ENCODE measurements at regions of chr2 and their contacts with region 1.

Region 1: GRCh38 chr2:209334198-209335017 is 89.4 kb upstream of the MAP2 start:
- DNase-seq: peak; percentile 84
- H3K4me3 Mint-ChIP-seq: no peak overlapping the region
- H3K27ac Mint-ChIP-seq: no peak overlapping the region
- H3K4me1 Mint-ChIP-seq: no peaks in the 10 kb centered on the region
- H3K27me3 Mint-ChIP-seq: no peaks in the 10 kb centered on the region
- CTCF ChIP-seq: peak; percentile 94

Region 2: GRCh38 chr2:208392300-208393080 is 941.9 kb before region 1 on chr2:
- CTCF ChIA-PET with region 1: interaction called, 23 read pairs
- POLR2A ChIA-PET with region 1: no interaction called
- intact Hi-C with region 1: loop called (anchors 2 kb)
- DNase-seq: peak; percentile 17
- H3K4me3 Mint-ChIP-seq: no peak overlapping the region
- H3K27ac Mint-ChIP-seq: no peak overlapping the region
- H3K4me1 Mint-ChIP-seq: no peaks in the 10 kb centered on the region
- H3K27me3 Mint-ChIP-seq: no peaks in the 10 kb centered on the region
- CTCF ChIP-seq: no peak

Region 3: GRCh38 chr2:208872591-208872990 is 461.8 kb before region 1 on chr2:
- CTCF ChIA-PET with region 1: no interaction called
- POLR2A ChIA-PET with region 1: no interaction called
- intact Hi-C with region 1: no loop called
- DNase-seq: peak; percentile 34
- H3K4me3 Mint-ChIP-seq: no peak overlapping the region
- H3K27ac Mint-ChIP-seq: no peak overlapping the region
- H3K4me1 Mint-ChIP-seq: no peaks in the 10 kb centered on the region
- H3K27me3 Mint-ChIP-seq: no peaks in the 10 kb centered on the region
- CTCF ChIP-seq: no peak

Region 4: GRCh38 chr2:209311948-209312347 is 22.5 kb before region 1 on chr2:
- CTCF ChIA-PET with region 1: no interaction called
- POLR2A ChIA-PET with region 1: no interaction called
- intact Hi-C with region 1: no loop called
- DNase-seq: no peak
- H3K4me3 Mint-ChIP-seq: no peak overlapping the region
- H3K27ac Mint-ChIP-seq: no peak overlapping the region
- H3K4me1 Mint-ChIP-seq: peaks cover 6% of the 10 kb centered on the region
- H3K27me3 Mint-ChIP-seq: peaks cover 23% of the 10 kb centered on the region
- CTCF ChIP-seq: no peak

Region 5: GRCh38 chr2:209322041-209322440 is 12.4 kb before region 1 on chr2:
- CTCF ChIA-PET with region 1: interaction called, 38 read pairs
- POLR2A ChIA-PET with region 1: no interaction called
- intact Hi-C with region 1: no loop called
- DNase-seq: no peak
- H3K4me3 Mint-ChIP-seq: no peak overlapping the region
- H3K27ac Mint-ChIP-seq: no peak overlapping the region
- H3K4me1 Mint-ChIP-seq: peaks cover 6% of the 10 kb centered on the region
- H3K27me3 Mint-ChIP-seq: no peaks in the 10 kb centered on the region
- CTCF ChIP-seq: no peak

Region 6: GRCh38 chr2:209380293-209380692 is 45.9 kb after region 1 on chr2:
- CTCF ChIA-PET with region 1: interaction called, 10 read pairs
- POLR2A ChIA-PET with region 1: no interaction called
- intact Hi-C with region 1: no loop called
- DNase-seq: no peak
- H3K4me3 Mint-ChIP-seq: no peak overlapping the region
- H3K27ac Mint-ChIP-seq: no peak overlapping the region
- H3K4me1 Mint-ChIP-seq: peaks cover 10% of the 10 kb centered on the region
- H3K27me3 Mint-ChIP-seq: no peaks in the 10 kb centered on the region
- CTCF ChIP-seq: no peak

Region 7: DNA sequence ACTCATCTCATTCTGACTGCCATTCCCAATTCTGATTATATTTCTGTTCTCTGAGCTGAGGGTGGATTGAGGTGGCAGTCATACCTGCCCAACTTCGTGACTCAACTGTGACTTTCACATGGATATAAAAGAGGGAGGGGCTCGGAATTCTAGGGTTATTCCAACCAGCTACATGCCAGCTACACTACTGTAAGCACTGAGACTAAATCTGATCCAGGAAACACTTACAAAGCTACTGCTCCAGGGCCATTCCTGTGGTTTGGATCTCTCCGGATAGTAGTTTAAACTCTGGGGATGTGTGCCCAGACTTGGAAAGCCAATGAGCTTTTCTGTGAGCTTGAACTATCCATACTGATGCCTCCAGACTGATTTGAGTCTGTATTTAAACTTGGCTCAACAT is 97.3 kb after region 1 on chr2:
- CTCF ChIA-PET with region 1: interaction called, 12 read pairs
- POLR2A ChIA-PET with region 1: no interaction called
- intact Hi-C with region 1: no loop called
- DNase-seq: peak; percentile 79
- H3K4me3 Mint-ChIP-seq: no peak overlapping the region
- H3K27ac Mint-ChIP-seq: peak overlapping the region; percentile 93
- H3K4me1 Mint-ChIP-seq: peaks cover 14% of the 10 kb centered on the region
- H3K27me3 Mint-ChIP-seq: no peaks in the 10 kb centered on the region
- CTCF ChIP-seq: no peak

Region 8: DNA sequence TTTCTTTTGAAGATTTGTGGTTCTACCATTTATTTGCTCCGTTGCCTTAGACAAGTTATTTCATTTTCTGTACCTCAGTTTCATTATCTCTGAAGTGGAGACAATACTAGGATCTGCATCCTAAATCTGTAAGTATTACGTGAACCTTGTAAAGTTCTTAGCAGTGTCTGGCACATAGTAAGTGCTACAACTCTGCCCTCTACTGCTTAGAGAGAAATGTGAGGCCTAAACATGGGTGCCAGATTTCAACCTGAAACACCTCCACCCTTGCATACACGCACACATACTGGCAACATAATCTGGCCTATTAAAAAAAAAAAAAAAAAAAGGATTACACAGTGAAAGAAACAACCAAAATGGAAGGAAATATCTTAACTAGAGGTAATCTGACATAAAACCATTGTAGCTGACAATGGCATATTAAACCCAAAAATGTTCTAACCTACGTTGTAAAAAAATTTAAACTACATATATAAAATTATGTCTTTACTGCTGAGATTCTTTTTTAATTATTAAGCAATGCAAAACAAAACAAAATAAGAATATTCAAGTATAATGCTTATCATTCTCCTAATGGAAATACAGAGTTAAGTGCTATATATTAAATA is 222.1 kb after region 1 on chr2:
- CTCF ChIA-PET with region 1: interaction called, 108 read pairs
- POLR2A ChIA-PET with region 1: interaction called, 3 read pairs
- intact Hi-C with region 1: loop called (anchors 1 kb)
- DNase-seq: peak; percentile 62
- H3K4me3 Mint-ChIP-seq: no peak overlapping the region
- H3K27ac Mint-ChIP-seq: no peak overlapping the region
- H3K4me1 Mint-ChIP-seq: no peaks in the 10 kb centered on the region
- H3K27me3 Mint-ChIP-seq: no peaks in the 10 kb centered on the region
- CTCF ChIP-seq: peak; percentile 61

Region 9: DNA sequence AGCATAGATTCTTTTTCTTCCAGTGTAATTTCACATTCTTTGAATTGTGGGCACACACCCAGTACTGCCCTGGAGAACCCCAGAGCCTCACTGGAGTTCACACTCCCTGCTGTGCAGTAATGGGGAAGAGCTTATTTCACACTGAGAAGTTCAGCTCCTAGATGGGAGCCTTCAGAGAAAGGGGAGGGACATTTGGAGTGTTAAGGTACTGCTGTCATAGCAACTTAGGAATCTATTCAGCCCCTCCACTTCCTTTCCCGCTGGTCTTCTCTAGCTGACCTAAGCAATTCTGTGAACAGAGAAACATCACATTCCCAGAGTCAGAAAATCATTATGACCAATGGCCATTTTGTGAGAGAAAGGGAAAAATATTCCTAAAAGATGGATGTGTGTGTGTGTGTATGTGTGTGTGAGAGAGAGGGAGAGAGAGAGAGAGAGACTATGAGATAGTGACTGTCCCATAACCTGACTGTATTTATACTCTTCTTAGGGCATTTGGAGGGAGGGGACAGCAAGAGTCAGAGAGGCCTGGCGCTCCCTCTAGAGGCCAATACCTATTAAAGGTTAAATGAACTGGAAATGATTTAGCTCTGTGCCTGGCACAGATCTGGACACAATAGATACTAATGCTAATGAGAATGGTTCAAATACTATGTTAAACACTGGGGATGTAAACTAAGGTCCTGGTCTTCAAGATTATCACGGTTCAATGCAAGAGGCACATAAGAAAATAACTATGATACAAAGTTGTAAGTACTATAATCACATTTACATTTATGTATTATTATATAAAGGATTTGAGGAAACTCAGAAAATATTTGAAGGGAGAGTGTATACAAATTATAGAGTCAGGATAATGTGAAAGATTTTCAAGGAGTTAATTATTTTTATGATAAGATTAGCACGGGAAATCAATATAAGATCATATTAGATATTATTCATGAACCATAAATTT is 626.5 kb after region 1 on chr2:
- CTCF ChIA-PET with region 1: interaction called, 29 read pairs
- POLR2A ChIA-PET with region 1: no interaction called
- intact Hi-C with region 1: loop called (anchors 1 kb)
- DNase-seq: peak; percentile 73
- H3K4me3 Mint-ChIP-seq: no peak overlapping the region
- H3K27ac Mint-ChIP-seq: no peak overlapping the region
- H3K4me1 Mint-ChIP-seq: no peaks in the 10 kb centered on the region
- H3K27me3 Mint-ChIP-seq: no peaks in the 10 kb centered on the region
- CTCF ChIP-seq: peak; percentile 68

Measured in MCF 10A (cell line).